Activated T-helper 1 cell treated with anti-CD3 and anti-CD28 coated beads, Interleukin-12 subunit alpha, Interleukin-12 subunit beta, Interleukin-2, Interleukin-4 antibody, amounts not matched to agents 30 ng/mL and 10 ng/mL and 1 ng/mL, durations not matched to agents 14 hours and 24 hours and 36 hours (primary cell): ENCODE measurements at regions of chr7 and their contacts with region 1.

Region 1: DNA sequence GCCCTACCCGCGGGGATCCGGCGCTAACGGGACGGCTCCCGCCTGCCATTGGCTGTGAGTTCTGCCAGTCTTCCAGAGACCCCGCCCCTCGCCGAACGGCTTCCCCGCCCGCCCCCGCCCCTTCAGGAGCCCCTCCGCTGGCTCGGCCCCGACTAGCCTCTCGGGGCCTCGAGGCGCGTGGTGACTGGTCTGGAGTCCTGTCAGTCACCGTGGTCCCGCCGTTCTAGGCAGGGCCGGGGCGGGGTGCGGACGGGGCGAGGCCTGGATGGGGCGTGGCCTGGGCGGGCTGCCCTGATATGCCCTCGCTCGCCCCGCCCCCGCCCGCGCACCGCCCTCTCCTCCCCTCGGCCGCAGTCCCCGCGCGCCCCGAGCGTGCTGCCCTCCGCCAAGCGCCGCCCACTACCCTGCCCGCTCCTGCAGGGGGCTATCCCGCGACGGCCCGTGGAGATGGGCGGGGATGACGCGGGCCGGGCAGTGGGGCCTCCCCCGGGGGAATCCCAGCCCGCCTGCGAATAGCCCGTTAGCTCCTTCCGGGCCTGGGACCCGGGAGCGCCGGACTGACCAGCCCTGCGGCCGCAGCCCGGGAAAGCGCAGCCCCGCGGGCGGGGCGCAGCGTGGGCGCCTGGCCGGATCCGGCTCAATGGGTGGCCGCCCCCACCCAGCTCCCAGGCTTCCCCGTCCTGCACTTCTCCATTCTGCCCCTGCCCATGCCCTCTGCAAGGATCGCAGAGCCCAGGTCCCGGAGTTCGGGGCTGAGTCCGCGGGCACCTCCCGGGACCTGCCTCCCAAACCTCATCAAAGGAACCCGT is 450 bp upstream of the HIP1 start:
- DNase-seq: peak; percentile 98
- H3K4me3 Mint-ChIP-seq: peak overlapping the region; percentile 93
- H3K27ac Mint-ChIP-seq: peak overlapping the region; percentile 96
- H3K4me1 Mint-ChIP-seq: peaks cover 21% of the 10 kb centered on the region
- H3K27me3 Mint-ChIP-seq: peaks cover 17% of the 10 kb centered on the region

Region 2: DNA sequence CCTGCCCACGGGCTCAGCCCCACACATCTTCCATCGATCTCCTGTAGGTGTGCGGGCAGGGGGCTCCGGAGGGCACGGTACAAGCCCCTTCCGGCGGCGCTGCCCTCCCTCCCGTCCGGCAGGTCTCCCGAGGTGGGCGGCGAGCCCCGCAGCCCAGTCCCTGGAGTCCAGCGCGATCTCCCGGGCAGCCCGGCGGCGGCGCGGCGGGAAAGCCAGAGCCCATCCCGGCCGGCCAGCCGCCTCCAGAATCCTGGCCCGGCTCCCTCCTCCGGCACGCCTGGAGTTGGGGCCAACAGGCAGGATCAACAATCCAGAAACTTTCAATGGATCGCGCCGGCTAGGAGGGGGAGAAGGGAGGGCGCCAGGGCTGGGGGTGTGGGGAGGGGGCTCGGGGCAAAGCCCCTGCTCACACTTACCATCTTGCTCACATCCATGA is 100.5 kb before region 1 on chr7:
- intact Hi-C with region 1: no loop called
- DNase-seq: no peak
- H3K4me3 Mint-ChIP-seq: no peak overlapping the region
- H3K27ac Mint-ChIP-seq: no peak overlapping the region
- H3K4me1 Mint-ChIP-seq: peaks cover 10% of the 10 kb centered on the region
- H3K27me3 Mint-ChIP-seq: peaks cover 28% of the 10 kb centered on the region

Region 3: DNA sequence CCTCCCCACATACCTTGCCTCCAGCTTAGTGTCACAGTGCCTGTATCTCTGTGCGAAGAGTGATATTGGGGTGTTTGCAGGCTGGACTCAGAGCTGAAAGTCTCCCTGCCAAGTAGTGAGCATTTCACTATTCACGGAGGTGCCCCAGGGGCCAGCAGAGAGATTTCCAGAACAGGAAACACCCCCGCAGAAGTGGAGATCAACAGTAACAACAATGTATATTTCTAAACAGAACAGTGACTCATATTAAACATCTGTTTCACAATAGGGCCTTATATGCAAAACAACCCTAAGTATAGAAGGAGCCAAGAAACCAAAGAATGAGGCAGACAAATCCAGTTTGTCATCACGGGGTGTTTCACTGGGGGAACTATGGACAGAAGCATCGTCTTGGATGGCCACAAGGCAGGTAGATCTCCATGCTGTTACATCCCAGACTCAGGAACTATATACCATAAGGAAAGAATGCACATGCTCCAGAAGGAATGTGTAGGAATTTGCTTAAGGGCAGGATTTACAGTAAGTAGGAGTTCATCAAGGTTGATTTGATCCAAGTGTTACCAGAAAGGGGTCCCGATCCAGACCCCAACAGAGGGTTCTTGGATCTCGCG is 103.8 kb after region 1 on chr7:
- intact Hi-C with region 1: loop called (anchors 2 kb)
- DNase-seq: peak; percentile 1
- H3K4me3 Mint-ChIP-seq: peak overlapping the region; percentile 76
- H3K27ac Mint-ChIP-seq: peak overlapping the region; percentile 92
- H3K4me1 Mint-ChIP-seq: peaks cover 17% of the 10 kb centered on the region
- H3K27me3 Mint-ChIP-seq: no peaks in the 10 kb centered on the region

Region 4: DNA sequence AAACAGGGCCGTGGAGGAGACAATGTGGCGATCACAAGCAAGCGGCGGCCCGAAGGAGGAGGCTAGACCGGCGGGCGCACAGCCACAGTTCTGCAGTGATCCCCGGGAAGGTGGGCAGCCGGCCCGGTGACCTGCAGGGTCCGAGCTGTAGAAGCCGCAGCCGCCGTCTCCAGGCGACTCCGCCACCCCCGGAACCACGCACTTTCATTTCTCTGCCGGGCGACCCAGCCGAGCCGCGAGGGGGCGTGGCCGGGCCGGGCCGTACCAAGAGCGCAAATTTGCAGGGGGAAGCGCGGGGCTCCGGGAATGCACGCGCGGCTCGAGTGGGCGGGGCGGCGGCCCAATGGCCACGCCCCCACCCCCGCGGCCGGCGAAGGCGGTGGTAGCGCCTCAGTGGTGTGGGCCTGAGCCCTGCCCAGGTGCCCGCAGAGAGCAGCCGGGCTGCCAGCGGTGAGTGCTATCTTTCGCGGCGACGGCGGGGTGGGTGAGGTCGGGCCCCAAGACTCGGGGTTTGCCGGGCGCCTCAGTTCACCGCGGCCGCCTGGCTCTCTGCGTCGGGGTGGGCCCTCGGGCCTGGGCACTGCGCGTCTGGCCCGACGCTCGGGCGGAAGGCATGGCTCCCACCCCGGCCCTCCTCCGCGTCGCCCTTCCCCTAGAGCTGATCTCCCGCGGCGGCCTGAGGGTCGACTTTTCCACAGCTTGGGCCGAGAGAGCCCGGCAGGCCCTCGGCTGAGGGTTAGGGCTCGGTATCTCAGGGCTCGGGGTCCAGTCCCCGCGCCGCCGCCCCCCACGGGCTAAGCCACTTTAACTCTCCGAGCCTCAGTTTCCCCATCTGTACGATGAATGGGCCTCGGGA is 175.8 kb after region 1 on chr7 and contains the start of gene POR:
- intact Hi-C with region 1: loop called (anchors 1 kb)
- DNase-seq: peak; percentile 97
- H3K4me3 Mint-ChIP-seq: peak within 1 kb of the TSS; percentile 91
- H3K27ac Mint-ChIP-seq: peak within 1 kb of the TSS; percentile 86
- H3K4me1 Mint-ChIP-seq: peaks cover 35% of the 10 kb centered on the region
- H3K27me3 Mint-ChIP-seq: peaks cover 3% of the 10 kb centered on the region
- total RNA-seq, gene POR: 84.4 and 91.2 TPM in 2 replicates

Region 5: GRCh38 chr7:76008156-76008687 is 269.0 kb after region 1 on chr7:
- intact Hi-C with region 1: loop called (anchors 5 kb)
- DNase-seq: peak; percentile 24
- H3K4me3 Mint-ChIP-seq: peak overlapping the region; percentile 52
- H3K27ac Mint-ChIP-seq: peak overlapping the region; percentile 94
- H3K4me1 Mint-ChIP-seq: peaks cover 35% of the 10 kb centered on the region
- H3K27me3 Mint-ChIP-seq: peaks cover 5% of the 10 kb centered on the region